ENCODE measurements at regions of chr1 and their contacts with region 1.

Region 1: DNA sequence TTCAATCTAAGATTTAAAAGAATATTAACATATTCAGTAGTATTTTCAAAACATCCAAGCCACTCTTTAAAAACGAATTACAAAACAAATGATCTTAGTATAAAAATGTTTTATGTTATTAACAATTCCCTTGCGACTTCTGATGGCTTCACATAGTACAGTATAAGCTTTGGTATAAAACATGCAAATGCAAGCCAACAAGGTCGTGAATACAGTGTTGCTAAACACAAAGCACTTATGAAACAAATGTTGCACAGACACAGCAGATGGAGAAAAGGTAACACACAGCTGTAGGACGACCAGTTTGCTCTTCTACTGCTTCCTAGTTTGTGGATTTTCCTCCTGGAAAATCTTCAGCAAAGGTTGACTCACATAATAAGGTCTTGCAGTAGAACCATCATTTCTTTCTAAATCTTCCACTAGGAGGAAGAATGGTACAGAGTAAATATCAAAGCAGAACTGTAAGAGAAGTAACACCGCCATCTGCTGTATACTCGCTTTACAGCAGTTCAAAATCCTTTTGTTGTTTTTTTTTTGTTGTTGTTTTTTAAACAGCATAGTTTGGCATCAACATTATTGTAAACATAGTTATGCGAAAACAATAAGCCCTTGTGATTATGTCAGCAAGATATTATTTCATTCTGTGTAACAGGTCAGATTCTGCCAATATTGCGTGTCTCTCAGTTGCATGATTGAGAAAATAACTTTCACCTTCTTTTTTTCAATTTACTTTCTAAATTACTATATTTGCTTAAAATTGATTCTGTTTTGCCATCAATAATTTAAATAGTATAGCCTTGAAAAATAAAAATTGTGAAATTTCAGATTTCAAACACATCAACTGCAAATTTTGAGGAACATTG is 69.5 kb downstream of the LHX8 start:
- DNase-seq: peak; percentile 52
- H3K4me3 Mint-ChIP-seq: no peak overlapping the region
- H3K27ac Mint-ChIP-seq: no peak overlapping the region
- H3K4me1 Mint-ChIP-seq: peaks cover 3% of the 10 kb centered on the region
- H3K27me3 Mint-ChIP-seq: peaks cover 7% of the 10 kb centered on the region
- CTCF ChIP-seq: peak; percentile 79

Region 2: DNA sequence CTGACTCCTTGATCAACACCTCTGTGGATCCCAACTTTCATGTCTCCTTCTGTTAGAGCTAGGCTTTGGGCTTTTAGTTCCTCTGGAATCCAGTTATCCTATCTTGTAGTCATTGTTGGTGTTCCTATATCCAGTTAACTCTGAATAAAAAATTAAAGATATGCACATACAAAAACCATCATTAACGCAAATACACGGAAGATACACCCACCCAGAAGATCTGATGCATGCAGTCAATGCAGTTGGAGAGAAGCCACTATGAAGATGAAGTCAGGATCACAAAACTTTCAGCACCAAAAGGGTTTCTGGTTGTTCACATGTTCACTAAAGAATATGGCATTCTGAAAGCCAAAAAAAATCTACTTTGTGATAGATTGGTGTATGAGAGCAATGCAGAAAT is 193.1 kb before region 1 on chr1:
- CTCF ChIA-PET with region 1: no interaction called
- POLR2A ChIA-PET with region 1: no interaction called
- intact Hi-C with region 1: no loop called
- DNase-seq: no peak
- H3K4me3 Mint-ChIP-seq: no peak overlapping the region
- H3K27ac Mint-ChIP-seq: no peak overlapping the region
- H3K4me1 Mint-ChIP-seq: peaks cover 5% of the 10 kb centered on the region
- H3K27me3 Mint-ChIP-seq: peaks cover 8% of the 10 kb centered on the region
- CTCF ChIP-seq: no peak

Region 3: DNA sequence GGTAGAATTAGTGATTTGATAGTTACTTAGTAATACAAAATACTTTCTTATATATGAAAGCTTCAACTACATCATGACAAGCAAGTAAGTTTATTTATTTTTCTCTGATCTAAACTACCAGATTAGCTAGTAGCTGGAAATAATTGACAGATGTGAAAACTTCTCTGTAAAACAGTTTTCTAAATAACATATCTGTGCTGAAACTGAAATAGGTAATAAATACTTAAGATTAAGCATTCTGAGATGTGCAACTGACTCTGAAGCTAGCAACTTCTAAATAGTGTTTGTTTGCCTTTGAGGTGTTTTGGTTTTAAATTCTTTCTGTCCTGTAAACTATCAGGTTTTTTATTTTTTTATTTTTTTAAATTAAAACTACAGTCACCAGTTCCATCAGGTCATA is 88.0 kb before region 1 on chr1:
- CTCF ChIA-PET with region 1: no interaction called
- POLR2A ChIA-PET with region 1: no interaction called
- intact Hi-C with region 1: no loop called
- DNase-seq: no peak
- H3K4me3 Mint-ChIP-seq: no peak overlapping the region
- H3K27ac Mint-ChIP-seq: no peak overlapping the region
- H3K4me1 Mint-ChIP-seq: no peaks in the 10 kb centered on the region
- H3K27me3 Mint-ChIP-seq: no peaks in the 10 kb centered on the region
- CTCF ChIP-seq: no peak

Region 4: DNA sequence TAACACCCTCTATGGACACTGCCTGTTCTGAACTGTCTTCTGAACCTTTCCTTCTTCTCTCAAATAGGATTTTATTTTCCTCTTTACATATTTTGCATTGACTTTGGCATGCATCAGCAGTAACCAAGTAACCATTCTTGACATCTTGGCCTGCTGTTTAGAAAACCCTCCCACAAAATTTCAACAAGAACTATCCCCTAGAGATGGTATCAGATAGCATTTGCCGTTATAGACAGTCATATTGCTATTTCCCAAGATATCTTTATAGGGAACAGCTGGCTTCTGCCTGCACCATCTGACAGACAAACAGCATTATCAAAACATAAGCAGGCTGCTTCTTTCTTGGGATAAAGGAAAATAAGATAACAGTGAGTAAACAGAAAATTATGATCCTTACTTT is 14.8 kb before region 1 on chr1:
- CTCF ChIA-PET with region 1: interaction called, 11 read pairs
- POLR2A ChIA-PET with region 1: no interaction called
- intact Hi-C with region 1: no loop called
- DNase-seq: no peak
- H3K4me3 Mint-ChIP-seq: no peak overlapping the region
- H3K27ac Mint-ChIP-seq: no peak overlapping the region
- H3K4me1 Mint-ChIP-seq: no peaks in the 10 kb centered on the region
- H3K27me3 Mint-ChIP-seq: peaks cover 35% of the 10 kb centered on the region
- CTCF ChIP-seq: no peak